Breast epithelium (tissue), 4 donors: ENCODE measurements at regions of chr9 and their contacts with region 1.

Region 1: DNA sequence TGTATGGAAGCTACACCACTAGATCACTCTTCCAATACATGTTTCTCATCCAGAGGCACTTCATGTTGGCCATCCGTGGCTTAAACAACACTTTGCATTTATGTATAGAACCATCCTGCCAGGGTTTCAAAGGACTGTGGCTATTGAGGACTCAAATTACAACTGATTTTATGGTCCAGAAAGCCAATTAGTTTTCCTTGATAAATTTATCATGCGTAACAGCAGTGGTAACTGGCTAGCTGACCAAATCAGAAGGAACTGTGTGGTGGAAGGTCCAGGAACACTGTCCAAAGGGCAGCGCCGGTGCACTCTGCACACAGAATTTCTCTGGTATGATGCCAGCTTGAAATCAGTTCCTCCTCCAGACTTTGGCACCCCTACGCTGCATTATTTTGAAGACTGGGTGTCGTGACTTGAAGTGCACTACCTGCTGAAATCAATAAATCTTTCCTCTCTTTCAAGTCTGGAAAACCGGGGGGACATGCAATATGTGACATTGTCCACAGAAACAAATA is 69.3 kb upstream of the TMEM252 start:
- DNase-seq: no peak
- H3K4me3 ChIP-seq: no peak overlapping the region
- H3K27ac ChIP-seq: no peak overlapping the region
- H3K4me1 ChIP-seq: no peaks in the 10 kb centered on the region
- H3K27me3 ChIP-seq: no peaks in the 10 kb centered on the region
- CTCF ChIP-seq: no peak
- POLR2A ChIP-seq: no peak

Region 2: GRCh38 chr9:68669218-68669617 is 59.3 kb after region 1 on chr9:
- intact Hi-C with region 1: loop called (anchors 2 kb)
- DNase-seq: no peak
- H3K4me3 ChIP-seq: no peak overlapping the region
- H3K27ac ChIP-seq: no peak overlapping the region
- H3K4me1 ChIP-seq: no peaks in the 10 kb centered on the region
- H3K27me3 ChIP-seq: no peaks in the 10 kb centered on the region
- CTCF ChIP-seq: no peak
- POLR2A ChIP-seq: no peak